ENCODE measurements at regions of chr18 and their contacts with region 1.

Region 1: GRCh38 chr18:67805261-67805660 is 288.7 kb upstream of the DSEL start:
- DNase-seq: no peak
- ATAC-seq: no peak
- H3K4me3 ChIP-seq: no peak overlapping the region
- H3K4me3 Mint-ChIP-seq: no peak overlapping the region
- H3K27ac ChIP-seq: no peak overlapping the region
- H3K27ac Mint-ChIP-seq: no peak overlapping the region
- H3K4me1 ChIP-seq: no peaks in the 10 kb centered on the region
- H3K4me1 Mint-ChIP-seq: no peaks in the 10 kb centered on the region
- H3K27me3 ChIP-seq: no peaks in the 10 kb centered on the region
- H3K27me3 Mint-ChIP-seq: no peaks in the 10 kb centered on the region
- CTCF ChIP-seq: no peak

Region 2: GRCh38 chr18:67742954-67743353 is 62.3 kb before region 1 on chr18:
- CTCF ChIA-PET with region 1: no interaction called
- POLR2A ChIA-PET with region 1: no interaction called
- intact Hi-C with region 1: loop called in 1 of 2 experiments (anchors 10 kb)
- DNase-seq: no peak
- ATAC-seq: no peak
- H3K4me3 ChIP-seq: no peak overlapping the region
- H3K4me3 Mint-ChIP-seq: no peak overlapping the region
- H3K27ac ChIP-seq: no peak overlapping the region
- H3K27ac Mint-ChIP-seq: no peak overlapping the region
- H3K4me1 ChIP-seq: no peaks in the 10 kb centered on the region
- H3K4me1 Mint-ChIP-seq: no peaks in the 10 kb centered on the region
- H3K27me3 ChIP-seq: no peaks in the 10 kb centered on the region
- H3K27me3 Mint-ChIP-seq: no peaks in the 10 kb centered on the region
- CTCF ChIP-seq: no peak

Region 3: GRCh38 chr18:67845035-67845434 is 39.8 kb after region 1 on chr18:
- CTCF ChIA-PET with region 1: no interaction called
- POLR2A ChIA-PET with region 1: no interaction called
- intact Hi-C with region 1: no loop called
- DNase-seq: no peak
- ATAC-seq: no peak
- H3K4me3 ChIP-seq: no peak overlapping the region
- H3K4me3 Mint-ChIP-seq: no peak overlapping the region
- H3K27ac ChIP-seq: no peak overlapping the region
- H3K27ac Mint-ChIP-seq: no peak overlapping the region
- H3K4me1 ChIP-seq: no peaks in the 10 kb centered on the region
- H3K4me1 Mint-ChIP-seq: no peaks in the 10 kb centered on the region
- H3K27me3 ChIP-seq: no peaks in the 10 kb centered on the region
- H3K27me3 Mint-ChIP-seq: no peaks in the 10 kb centered on the region
- CTCF ChIP-seq: no peak

Measured in CD4-positive, alpha-beta T cell (primary cell).